Right ventricle myocardium inferior (tissue), 1 donor: ENCODE measurements at regions of chr7 and their contacts with region 1.

Region 1: GRCh38 chr7:82044497-82045080 is 274.7 kb upstream of the HGF start:
- DNase-seq: no peak
- ATAC-seq: no peak

Region 2: GRCh38 chr7:82481499-82482097 is 437.0 kb after region 1 on chr7:
- intact Hi-C with region 1: loop called (anchors 5 kb)
- DNase-seq: no peak
- ATAC-seq: no peak

Region 3: DNA sequence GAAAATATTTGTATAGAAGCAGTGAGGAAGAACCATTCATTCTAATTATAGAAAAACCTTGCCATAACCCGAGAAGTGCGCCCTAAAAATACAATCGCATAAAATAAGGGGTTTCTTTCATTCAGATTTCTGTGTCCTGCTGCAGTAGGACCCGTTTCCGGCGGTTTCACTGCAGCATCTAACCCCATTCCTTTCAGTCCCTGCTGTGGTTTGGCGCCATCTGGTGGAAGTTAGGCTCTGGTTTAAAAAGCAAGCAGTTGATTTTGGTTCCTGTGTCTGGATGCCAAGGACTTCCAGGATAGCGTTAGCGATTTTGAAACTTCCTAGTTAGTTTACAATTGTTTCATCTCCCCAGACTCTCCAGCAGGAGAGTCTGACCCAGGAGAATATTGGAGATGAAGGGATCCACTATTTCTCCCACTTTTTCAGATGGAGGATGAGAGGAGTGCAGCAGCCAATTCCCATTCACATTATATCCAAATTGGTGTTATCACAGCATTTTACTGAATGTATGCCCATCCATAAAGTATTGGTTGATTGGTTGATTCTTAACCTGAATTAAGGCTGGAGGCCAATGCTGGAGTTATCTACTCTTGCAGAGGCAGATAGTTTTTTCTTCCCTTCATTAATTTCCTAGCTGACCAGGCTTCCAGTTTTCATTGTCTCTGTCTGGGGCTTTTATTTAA is 527.7 kb after region 1 on chr7:
- intact Hi-C with region 1: loop called (anchors 2 kb)
- DNase-seq: peak; percentile 77
- ATAC-seq: peak; percentile 83